ENCODE measurements at regions of chr10 and their contacts with region 1.

Region 1: GRCh38 chr10:110137142-110137545 is 70.3 kb upstream of the MXI1 start:
- DNase-seq: no peak
- ATAC-seq: peak; percentile 66
- H3K4me3 Mint-ChIP-seq: no peak overlapping the region
- H3K27ac Mint-ChIP-seq: peak overlapping the region; percentile 68
- H3K4me1 Mint-ChIP-seq: peaks cover 35% of the 10 kb centered on the region
- H3K27me3 Mint-ChIP-seq: no peaks in the 10 kb centered on the region
- CTCF ChIP-seq: no peak

Region 2: GRCh38 chr10:110151986-110152385 is 14.8 kb after region 1 on chr10:
- CTCF ChIA-PET with region 1: interaction called, 5 read pairs
- POLR2A ChIA-PET with region 1: no interaction called
- intact Hi-C with region 1: loop called (anchors 1 kb)
- DNase-seq: no peak
- ATAC-seq: no peak
- H3K4me3 Mint-ChIP-seq: no peak overlapping the region
- H3K27ac Mint-ChIP-seq: no peak overlapping the region
- H3K4me1 Mint-ChIP-seq: peaks cover 60% of the 10 kb centered on the region
- H3K27me3 Mint-ChIP-seq: peaks cover 33% of the 10 kb centered on the region
- CTCF ChIP-seq: no peak

Region 3: DNA sequence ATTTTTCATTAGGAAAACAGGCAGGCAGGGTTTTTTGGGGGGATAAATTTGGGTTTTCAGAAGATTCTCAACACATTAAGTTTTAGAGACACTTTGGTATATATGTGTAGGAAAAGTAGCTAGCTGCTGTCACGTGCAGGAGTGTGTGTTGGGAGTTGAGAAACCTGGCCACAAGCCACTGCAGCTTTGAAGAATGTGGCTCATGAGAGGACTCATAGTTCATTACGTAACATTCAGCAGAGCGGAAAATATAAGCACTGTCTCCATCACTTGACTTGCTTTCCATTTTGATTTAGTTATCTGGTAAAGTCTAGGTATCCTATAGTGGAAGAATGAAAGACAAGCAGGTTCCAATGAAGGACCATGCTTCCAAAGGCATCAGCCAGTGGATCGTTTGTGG is 136.3 kb after region 1 on chr10:
- CTCF ChIA-PET with region 1: interaction called, 73 read pairs
- POLR2A ChIA-PET with region 1: interaction called, 7 read pairs
- intact Hi-C with region 1: no loop called
- DNase-seq: no peak
- ATAC-seq: peak; percentile 69
- H3K4me3 Mint-ChIP-seq: no peak overlapping the region
- H3K27ac Mint-ChIP-seq: peak overlapping the region; percentile 42
- H3K4me1 Mint-ChIP-seq: peaks cover 38% of the 10 kb centered on the region
- H3K27me3 Mint-ChIP-seq: no peaks in the 10 kb centered on the region
- CTCF ChIP-seq: no peak

Region 4: DNA sequence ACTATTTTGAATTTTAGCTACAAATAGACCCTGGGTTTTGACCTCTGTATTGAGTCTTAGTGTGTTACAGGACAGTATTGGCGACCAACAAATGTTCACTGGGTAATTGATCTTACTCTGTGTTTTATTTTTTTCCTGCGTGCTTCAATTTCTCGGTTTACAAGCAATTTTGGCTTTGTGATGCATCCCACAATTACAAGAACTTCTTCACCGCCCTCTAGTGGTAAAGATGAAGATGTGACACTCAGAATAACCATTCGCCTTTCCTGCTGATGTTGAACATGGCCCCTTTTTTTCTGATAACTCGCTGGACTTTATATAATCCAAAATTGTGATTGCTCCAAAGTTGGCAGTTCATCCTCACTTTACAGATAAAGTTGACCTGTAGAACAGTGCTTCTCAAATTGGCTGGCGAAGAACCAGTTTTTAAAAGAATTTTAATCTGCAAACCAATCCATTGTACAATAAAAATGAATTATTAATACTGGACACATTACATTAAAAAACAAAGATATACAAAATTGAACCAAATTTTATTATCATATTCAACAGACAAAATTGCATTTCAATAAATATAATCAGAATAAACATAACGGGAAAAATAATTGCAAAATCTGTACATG is 410.1 kb after region 1 on chr10:
- CTCF ChIA-PET with region 1: interaction called, 4 read pairs
- POLR2A ChIA-PET with region 1: no interaction called
- intact Hi-C with region 1: loop called (anchors 2 kb)
- DNase-seq: no peak
- ATAC-seq: peak; percentile 67
- H3K4me3 Mint-ChIP-seq: no peak overlapping the region
- H3K27ac Mint-ChIP-seq: no peak overlapping the region
- H3K4me1 Mint-ChIP-seq: peaks cover 6% of the 10 kb centered on the region
- H3K27me3 Mint-ChIP-seq: peaks cover 10% of the 10 kb centered on the region
- CTCF ChIP-seq: no peak

Region 5: GRCh38 chr10:110600487-110601101 is 463.4 kb after region 1 on chr10:
- CTCF ChIA-PET with region 1: interaction called, 3 read pairs
- POLR2A ChIA-PET with region 1: no interaction called
- intact Hi-C with region 1: loop called (anchors 2 kb)
- DNase-seq: no peak
- ATAC-seq: peak; percentile 67
- H3K4me3 Mint-ChIP-seq: no peak overlapping the region
- H3K27ac Mint-ChIP-seq: no peak overlapping the region
- H3K4me1 Mint-ChIP-seq: no peaks in the 10 kb centered on the region
- H3K27me3 Mint-ChIP-seq: no peaks in the 10 kb centered on the region
- CTCF ChIP-seq: no peak

Region 6: GRCh38 chr10:111475720-111476119 is 1338.6 kb after region 1 on chr10:
- CTCF ChIA-PET with region 1: no interaction called
- POLR2A ChIA-PET with region 1: no interaction called
- intact Hi-C with region 1: no loop called
- DNase-seq: no peak
- ATAC-seq: no peak
- H3K4me3 Mint-ChIP-seq: no peak overlapping the region
- H3K27ac Mint-ChIP-seq: no peak overlapping the region
- H3K4me1 Mint-ChIP-seq: no peaks in the 10 kb centered on the region
- H3K27me3 Mint-ChIP-seq: peaks cover 2% of the 10 kb centered on the region
- CTCF ChIP-seq: no peak

Measured in activated B cell treated with CpG ODN at 0.5 μM for 24 hours (primary cell).